ENCODE measurements at regions of chr7 and their contacts with region 1.

Region 1: GRCh38 chr7:130182990-130183389 is 22.2 kb downstream of the TMEM209 start:
- DNase-seq: no peak
- H3K4me3 ChIP-seq: no peak overlapping the region
- H3K27ac ChIP-seq: no peak overlapping the region
- H3K4me1 ChIP-seq: no peaks in the 10 kb centered on the region
- H3K27me3 ChIP-seq: no peaks in the 10 kb centered on the region
- CTCF ChIP-seq: no peak
- EP300 ChIP-seq: no peak
- POLR2A ChIP-seq: no peak

Region 2: DNA sequence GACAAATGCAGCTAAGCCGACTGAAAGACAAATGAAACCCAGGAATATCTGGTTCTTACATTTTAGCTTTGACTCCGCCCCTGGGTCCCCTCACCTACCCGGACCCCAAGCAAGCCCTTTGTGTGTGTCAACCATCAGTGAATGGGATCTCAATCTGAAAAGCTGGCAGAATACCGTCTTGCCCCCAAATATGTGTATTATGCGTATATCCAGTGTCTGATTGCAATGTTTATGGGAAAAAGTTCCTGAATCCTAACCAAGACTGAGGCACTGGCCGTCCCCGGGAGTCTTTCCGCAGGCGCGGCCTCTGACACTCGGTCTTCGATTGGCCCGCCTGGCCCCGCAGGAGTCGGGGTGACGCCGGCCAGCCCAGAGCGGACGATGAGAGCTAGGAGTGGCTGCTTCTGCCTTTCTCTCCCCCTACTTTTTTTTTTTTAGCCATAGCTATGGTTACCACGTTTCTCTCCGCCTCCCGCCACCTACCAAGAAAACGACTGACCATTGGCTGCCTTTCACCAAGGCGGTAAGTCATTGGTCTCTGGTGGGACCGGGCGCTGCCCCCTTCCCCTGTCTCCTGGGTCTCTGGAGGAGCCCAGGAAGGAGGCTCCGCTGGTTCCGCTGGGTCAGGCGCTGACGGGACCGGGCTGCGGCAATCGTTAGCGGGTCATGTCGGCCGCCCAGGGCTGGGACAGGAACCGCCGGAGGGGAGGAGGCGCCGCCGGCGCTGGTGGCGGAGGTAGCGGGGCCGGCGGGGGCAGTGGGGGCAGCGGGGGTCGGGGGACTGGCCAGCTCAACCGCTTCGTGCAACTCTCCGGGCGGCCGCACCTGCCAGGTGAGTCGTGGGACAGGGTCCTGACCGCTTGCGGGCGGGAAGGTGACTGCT is 112.8 kb before region 1 on chr7 and contains the start of gene KLHDC10:
- intact Hi-C with region 1: no loop called
- DNase-seq: peak; percentile 99
- H3K4me3 ChIP-seq: peak within 1 kb of the TSS; percentile 80 to 98 (median 95)
- H3K27ac ChIP-seq: peak within 1 kb of the TSS; percentile 87 to 89 (median 88)
- H3K4me1 ChIP-seq: peaks cover 0 to 42% (median 31%) of the 10 kb centered on the region in 4 donors
- H3K27me3 ChIP-seq: no peaks in the 10 kb centered on the region
- CTCF ChIP-seq: no peak
- EP300 ChIP-seq: no peak
- POLR2A ChIP-seq: peak in 1 of 2 donors; percentile 32
- total RNA-seq, gene KLHDC10: 16.3 to 22.5 (median 17.8) TPM

Region 3: DNA sequence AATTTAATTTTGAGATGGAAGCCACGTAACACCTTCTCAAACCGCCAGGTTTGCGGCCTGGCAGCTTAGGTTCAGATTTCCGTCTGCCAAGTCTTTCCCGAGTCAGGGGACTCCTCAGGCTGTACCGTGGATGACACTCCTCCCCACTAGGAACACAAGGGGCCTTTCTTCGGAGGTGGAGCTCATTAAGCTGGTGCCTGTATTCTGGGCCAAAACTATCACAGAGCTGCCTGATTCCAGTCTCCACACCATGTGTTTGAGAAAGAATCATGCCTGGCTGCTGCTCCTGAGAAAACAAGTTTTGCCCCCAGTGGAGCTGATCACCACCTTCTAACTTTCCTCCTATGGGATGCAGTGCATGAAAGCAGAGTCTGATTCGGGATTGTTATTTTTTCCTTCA is 22.5 kb before region 1 on chr7:
- intact Hi-C with region 1: loop called (anchors 2 kb)
- DNase-seq: no peak
- H3K4me3 ChIP-seq: no peak overlapping the region
- H3K27ac ChIP-seq: no peak overlapping the region
- H3K4me1 ChIP-seq: no peaks in the 10 kb centered on the region
- H3K27me3 ChIP-seq: no peaks in the 10 kb centered on the region
- CTCF ChIP-seq: no peak
- EP300 ChIP-seq: no peak
- POLR2A ChIP-seq: no peak